Psoas muscle (tissue), 8 donors: ENCODE measurements at regions of chr5 and their contacts with region 1.

Region 1: GRCh38 chr5:127875235-127876021 is 172.2 kb downstream of the CCDC192 start:
- DNase-seq: peak; percentile 28 to 77
- ATAC-seq: peak; percentile 87 to 95 (median 93)
- H3K4me3 ChIP-seq: peak overlapping the region; percentile 37
- H3K27ac ChIP-seq: peak overlapping the region; percentile 74
- H3K4me1 ChIP-seq: peaks cover 47% of the 10 kb centered on the region
- H3K27me3 ChIP-seq: no peaks in the 10 kb centered on the region
- CTCF ChIP-seq: peak; percentile 32

Region 2: GRCh38 chr5:127564002-127564769 is 311.2 kb before region 1 on chr5:
- intact Hi-C with region 1: loop called in 1 of 2 experiments (anchors 5 kb)
- DNase-seq: no peak
- ATAC-seq: peak; percentile 64 to 86 (median 74)
- H3K4me3 ChIP-seq: no peak overlapping the region
- H3K27ac ChIP-seq: peak overlapping the region; percentile 7
- H3K4me1 ChIP-seq: peaks cover 31% of the 10 kb centered on the region
- H3K27me3 ChIP-seq: no peaks in the 10 kb centered on the region
- CTCF ChIP-seq: peak; percentile 74

Region 3: DNA sequence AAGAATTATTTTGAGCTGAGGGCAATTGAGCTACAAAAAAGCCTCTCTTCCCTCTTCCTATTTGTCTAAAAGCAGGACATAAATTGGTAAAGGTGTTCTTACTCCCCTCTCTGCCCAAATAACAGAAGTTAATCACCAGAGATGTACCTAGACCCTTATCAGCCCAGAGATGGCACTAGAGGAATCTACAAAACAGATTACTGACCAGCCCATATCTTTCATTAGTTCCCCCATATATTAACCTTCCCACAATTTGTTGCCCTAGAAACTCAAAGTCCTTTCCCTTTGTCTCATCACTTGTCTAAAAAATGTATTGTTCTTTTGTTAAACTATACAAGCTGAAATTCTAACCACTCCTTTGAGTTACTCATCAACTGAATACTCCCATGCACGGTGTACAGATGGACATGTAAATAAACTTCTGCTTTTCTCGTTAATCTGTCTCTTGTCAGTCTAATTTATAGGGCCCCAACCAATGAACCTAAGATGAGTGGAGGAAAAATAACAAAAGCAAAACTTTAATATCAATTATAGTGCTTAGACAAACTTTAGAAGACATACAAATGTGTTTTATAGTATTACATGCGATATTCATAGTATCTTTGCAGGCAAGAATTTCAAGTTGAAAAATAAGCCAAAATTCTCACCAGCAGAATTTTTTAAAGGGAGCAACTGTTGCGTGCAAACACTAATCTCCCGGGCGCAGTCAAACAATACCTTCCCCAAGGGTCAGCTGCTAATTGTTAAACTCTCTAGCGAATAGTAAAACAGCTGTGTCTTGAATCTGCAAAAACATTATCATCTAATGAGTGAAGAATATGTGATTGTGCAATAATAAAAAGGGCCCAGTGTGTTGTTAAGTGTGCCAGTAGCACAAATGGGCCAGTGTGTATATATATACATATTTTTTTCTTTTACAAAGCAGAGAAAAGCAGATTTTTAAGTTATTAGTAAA is 41.2 kb before region 1 on chr5:
- intact Hi-C with region 1: no loop called
- DNase-seq: no peak
- ATAC-seq: peak in 1 of 4 donors; percentile 44
- H3K4me3 ChIP-seq: no peak overlapping the region
- H3K27ac ChIP-seq: no peak overlapping the region
- H3K4me1 ChIP-seq: peaks cover 13% of the 10 kb centered on the region
- H3K27me3 ChIP-seq: no peaks in the 10 kb centered on the region
- CTCF ChIP-seq: no peak

Region 4: GRCh38 chr5:128074171-128074570 is 198.7 kb after region 1 on chr5:
- intact Hi-C with region 1: no loop called
- DNase-seq: no peak
- ATAC-seq: no peak
- H3K4me3 ChIP-seq: no peak overlapping the region
- H3K27ac ChIP-seq: no peak overlapping the region
- H3K4me1 ChIP-seq: peaks cover 12% of the 10 kb centered on the region
- H3K27me3 ChIP-seq: no peaks in the 10 kb centered on the region
- CTCF ChIP-seq: no peak